Activated T-helper 2 cell treated with anti-CD3 and anti-CD28 coated beads, Interferon-gamma antibody, Interleukin-2, Interleukin-4, amounts not matched to agents 10 μg/mL and 5 μg/mL and 100 μg/mL, durations not matched to agents 14 hours and 24 hours and 36 hours (primary cell): ENCODE measurements at regions of chr15 and their contacts with region 1.

Region 1: DNA sequence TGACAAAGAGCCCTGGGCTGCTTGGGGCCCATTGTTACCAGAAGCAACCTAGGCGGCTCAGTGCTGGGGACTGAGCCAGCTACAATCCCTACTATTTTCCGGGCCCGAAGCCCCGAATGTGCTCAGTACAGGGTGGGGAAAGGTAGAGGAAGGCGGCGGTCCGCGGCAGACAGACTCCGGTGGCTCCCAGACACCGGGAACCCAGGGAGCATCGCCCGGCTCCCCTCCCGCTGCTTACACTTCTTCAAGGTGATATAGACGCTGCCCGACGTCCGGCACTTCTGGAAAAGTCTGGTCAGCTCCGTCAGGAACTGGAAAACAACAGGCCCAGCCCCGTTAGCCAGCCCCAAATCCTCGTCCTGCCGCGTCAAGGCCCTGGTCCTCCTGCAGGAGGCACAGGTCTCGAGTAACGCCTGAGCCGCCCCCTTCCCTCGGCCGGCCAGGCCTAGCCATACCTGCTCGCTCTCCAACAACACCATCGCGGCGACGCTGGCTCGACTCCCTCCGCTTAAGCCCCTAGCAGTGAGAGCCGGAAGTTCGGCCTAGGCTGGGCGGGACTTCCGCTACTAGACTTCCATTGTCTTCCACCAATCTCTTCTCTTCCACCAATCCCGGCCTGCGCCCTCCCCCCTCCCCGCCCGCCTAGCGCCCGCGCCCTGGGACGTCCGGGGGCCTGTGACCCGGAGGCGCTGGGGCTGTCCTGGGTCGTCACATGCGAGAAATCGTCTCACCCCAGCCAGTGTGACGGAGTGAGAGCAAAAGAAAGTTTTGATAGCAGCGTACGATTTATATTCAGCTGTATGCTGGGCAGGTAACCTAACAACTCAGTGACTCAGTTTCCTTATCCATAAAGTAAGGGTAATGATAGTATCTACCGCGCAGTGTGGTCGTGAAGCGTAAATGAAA is at the start of gene SRP14:
- DNase-seq: peak; percentile 87
- H3K4me3 Mint-ChIP-seq: peak within 1 kb of the TSS; percentile 91
- H3K27ac Mint-ChIP-seq: peak within 1 kb of the TSS; percentile 95
- H3K4me1 Mint-ChIP-seq: peaks cover 44% of the 10 kb centered on the region
- H3K27me3 Mint-ChIP-seq: no peaks in the 10 kb centered on the region
- total RNA-seq, gene SRP14: 160 and 167 TPM in 2 replicates

Region 2: GRCh38 chr15:39887832-39888231 is 151.1 kb before region 1 on chr15:
- intact Hi-C with region 1: loop called (anchors 10 kb)
- DNase-seq: no peak
- H3K4me3 Mint-ChIP-seq: no peak overlapping the region
- H3K27ac Mint-ChIP-seq: no peak overlapping the region
- H3K4me1 Mint-ChIP-seq: no peaks in the 10 kb centered on the region
- H3K27me3 Mint-ChIP-seq: peaks cover 15% of the 10 kb centered on the region